ENCODE measurements at regions of chr7 and their contacts with region 1.

Region 1: DNA sequence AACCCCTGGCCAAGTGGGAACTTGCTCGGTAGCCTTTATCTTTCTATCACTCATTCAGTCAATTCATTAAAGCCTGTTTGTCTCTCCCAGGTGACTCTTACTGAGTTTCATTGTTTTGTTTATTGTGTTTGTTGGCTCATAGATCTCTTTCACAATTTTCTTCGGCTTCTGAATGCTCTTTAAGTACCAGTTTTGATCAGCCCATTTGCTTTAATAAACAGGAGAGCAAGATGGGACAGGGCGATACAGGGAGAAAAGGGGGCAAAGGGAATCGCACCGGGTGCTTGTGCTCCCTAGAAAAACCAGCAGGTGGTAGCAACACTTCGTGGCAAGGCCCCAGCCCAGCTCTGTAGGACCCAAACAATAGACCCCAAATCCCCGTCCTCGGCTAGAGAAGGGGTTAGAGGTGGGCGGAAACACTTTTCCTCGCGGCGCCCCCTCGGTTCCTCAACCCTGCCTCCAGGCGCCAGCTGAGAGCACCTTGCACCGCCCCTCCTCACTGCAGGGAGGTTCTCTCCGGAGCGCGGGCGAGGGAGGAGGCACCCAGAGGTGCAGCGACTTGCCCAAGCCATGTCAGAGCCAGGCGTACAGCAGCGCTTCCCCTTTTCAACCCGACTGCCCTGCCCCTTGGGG is 1.0 kb upstream of the EPHB6 start:
- DNase-seq: peak; percentile 78
- ATAC-seq: peak; percentile 84
- H3K4me3 Mint-ChIP-seq: peak overlapping the region; percentile 88
- H3K27ac Mint-ChIP-seq: peak overlapping the region; percentile 77
- H3K4me1 Mint-ChIP-seq: peaks cover 4% of the 10 kb centered on the region
- H3K27me3 Mint-ChIP-seq: peaks cover 15% of the 10 kb centered on the region

Region 2: DNA sequence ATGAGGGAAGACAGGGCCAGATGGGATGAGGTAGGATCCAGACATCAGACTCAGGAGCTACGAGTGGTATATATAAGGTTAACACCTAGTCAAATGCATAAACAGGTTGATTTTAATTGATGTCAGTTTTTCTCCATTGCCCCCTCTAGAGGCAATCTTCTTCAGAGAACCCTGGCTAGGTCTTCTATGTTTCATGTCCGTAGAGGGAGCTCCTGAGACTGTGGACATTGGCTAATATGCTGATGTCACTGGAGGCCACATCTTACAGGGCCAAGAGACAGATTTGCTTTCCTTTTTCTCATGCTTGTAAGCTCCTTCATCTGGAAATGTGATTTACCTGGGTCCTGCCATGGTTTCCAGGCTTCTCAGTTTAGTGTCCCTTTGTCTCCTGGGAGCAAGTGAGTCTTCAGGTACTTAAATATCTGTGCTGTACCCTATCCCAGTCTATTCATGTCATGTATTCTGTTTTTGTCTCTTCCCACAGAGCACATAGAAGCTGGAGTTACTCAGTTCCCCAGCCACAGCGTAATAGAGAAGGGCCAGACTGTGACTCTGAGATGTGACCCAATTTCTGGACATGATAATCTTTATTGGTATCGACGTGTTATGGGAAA is 266.2 kb before region 1 on chr7:
- CTCF ChIA-PET with region 1: no interaction called
- DNase-seq: no peak
- ATAC-seq: peak; percentile 88
- H3K4me3 Mint-ChIP-seq: no peak overlapping the region
- H3K27ac Mint-ChIP-seq: no peak overlapping the region
- H3K4me1 Mint-ChIP-seq: peaks cover 4% of the 10 kb centered on the region
- H3K27me3 Mint-ChIP-seq: no peaks in the 10 kb centered on the region

Region 3: DNA sequence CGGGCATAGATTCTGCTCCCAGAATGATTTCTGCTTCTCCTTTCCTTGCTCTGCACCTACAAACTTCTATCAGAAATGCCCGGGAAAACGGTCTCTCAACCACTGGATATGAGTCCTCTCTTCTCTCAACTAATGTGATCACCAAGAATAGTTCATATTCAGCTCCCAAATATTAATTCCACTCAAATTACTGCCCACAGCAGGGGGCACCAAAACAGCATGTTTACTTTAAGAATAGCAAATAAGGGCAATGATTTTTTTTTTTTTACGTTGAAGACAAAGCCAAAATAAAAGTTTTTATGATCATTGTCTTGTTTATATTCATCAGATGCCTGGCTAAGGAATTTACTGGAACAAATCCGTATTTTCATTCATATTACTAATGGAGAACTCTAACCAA is 199.5 kb before region 1 on chr7:
- CTCF ChIA-PET with region 1: no interaction called
- DNase-seq: no peak
- ATAC-seq: no peak
- H3K4me3 Mint-ChIP-seq: no peak overlapping the region
- H3K27ac Mint-ChIP-seq: no peak overlapping the region
- H3K4me1 Mint-ChIP-seq: peaks cover 5% of the 10 kb centered on the region
- H3K27me3 Mint-ChIP-seq: peaks cover 7% of the 10 kb centered on the region

Region 4: DNA sequence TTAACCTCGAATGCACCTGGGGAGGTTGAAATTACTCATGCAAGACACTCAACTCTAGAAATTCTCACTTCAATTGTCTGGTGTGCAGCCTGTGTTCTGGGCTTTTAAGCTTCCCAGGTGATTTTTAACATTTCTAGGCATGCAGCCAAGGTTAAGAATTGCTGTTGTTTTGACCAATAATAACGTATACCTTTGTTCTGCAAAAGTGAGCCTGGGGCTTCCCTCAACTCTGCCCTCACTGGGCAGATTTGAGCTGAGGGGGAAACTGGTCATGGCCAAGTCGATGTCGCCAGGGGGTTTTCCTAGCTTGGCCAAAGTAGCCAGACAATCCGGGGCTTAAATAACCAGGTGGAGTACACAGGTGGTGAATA is 82.5 kb before region 1 on chr7:
- CTCF ChIA-PET with region 1: no interaction called
- DNase-seq: no peak
- ATAC-seq: no peak
- H3K4me3 Mint-ChIP-seq: no peak overlapping the region
- H3K27ac Mint-ChIP-seq: no peak overlapping the region
- H3K4me1 Mint-ChIP-seq: peaks cover 12% of the 10 kb centered on the region
- H3K27me3 Mint-ChIP-seq: no peaks in the 10 kb centered on the region

Region 5: GRCh38 chr7:142866361-142867058 is 12.7 kb after region 1 on chr7:
- CTCF ChIA-PET with region 1: interaction called, 21 read pairs
- DNase-seq: peak; percentile 35
- ATAC-seq: peak; percentile 27
- H3K4me3 Mint-ChIP-seq: no peak overlapping the region
- H3K27ac Mint-ChIP-seq: no peak overlapping the region
- H3K4me1 Mint-ChIP-seq: no peaks in the 10 kb centered on the region
- H3K27me3 Mint-ChIP-seq: no peaks in the 10 kb centered on the region

Region 6: DNA sequence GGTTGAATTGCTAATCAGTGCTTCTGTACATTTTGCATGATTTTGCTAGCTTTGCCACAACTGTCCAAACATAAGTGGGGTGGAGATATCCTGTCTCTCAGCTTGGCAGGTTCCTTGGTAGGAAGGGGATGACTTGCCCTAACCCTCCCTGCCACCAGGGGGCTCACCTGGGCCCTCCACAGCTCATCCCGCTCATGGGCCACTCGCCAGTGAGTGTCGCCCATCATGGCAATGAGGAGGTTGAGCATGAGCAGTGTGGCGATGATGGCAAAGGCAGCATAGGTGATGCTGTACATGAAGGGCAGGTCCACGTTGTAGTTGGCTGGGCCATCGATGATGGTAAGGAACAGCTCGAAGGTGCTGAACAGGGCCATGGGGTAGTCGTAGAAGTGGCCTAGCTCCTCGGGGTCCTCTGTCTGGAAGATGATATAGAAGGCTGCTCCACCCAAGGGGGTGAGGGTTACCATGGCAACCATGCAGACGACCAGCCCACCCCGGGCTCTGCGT is 19.5 kb after region 1 on chr7:
- CTCF ChIA-PET with region 1: interaction called, 21 read pairs
- DNase-seq: peak; percentile 50
- ATAC-seq: peak; percentile 54
- H3K4me3 Mint-ChIP-seq: no peak overlapping the region
- H3K27ac Mint-ChIP-seq: no peak overlapping the region
- H3K4me1 Mint-ChIP-seq: no peaks in the 10 kb centered on the region
- H3K27me3 Mint-ChIP-seq: no peaks in the 10 kb centered on the region

Region 7: DNA sequence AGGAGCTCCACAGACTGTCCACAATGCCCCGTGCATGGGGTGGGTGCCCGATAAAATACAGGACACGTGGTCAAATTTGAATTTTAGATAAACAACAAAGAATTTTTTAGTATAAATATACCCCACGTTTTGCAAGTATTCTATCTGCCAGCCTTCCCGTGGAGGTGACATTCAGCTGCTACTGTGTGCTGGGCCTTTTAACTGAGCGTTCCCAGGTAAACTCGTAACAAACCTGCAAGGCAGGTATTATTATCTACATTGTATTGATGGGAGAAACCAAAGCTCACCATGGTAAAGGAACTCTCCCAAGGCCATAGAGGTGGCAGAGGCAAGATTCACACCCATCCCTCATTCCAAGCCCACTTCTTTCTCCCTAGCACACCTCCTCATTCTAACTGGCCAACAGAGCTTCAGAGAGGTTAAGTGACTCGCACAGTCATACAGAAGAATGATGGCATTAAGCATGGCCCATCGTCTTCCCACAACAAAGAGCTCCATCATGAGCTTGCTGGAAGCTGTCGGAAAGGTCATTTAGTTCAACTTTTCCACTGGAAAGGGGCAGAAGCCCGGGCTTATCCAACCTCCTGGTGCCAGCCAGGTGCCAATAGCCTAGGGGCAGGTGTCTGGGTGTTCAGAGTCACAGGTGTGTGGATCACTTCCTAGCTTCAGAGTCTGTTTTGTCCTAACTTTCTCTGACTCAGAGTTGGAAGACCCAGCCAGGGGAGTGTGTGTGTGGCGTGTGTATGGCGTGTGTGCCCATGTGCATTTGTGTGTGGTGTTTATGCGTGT is 32.8 kb after region 1 on chr7:
- CTCF ChIA-PET with region 1: no interaction called
- DNase-seq: no peak
- ATAC-seq: no peak
- H3K4me3 Mint-ChIP-seq: no peak overlapping the region
- H3K27ac Mint-ChIP-seq: no peak overlapping the region
- H3K4me1 Mint-ChIP-seq: no peaks in the 10 kb centered on the region
- H3K27me3 Mint-ChIP-seq: peaks cover 3% of the 10 kb centered on the region

Measured in activated CD8-positive, alpha-beta memory T cell treated with anti-CD3 and anti-CD28 coated beads, Interleukin-2, amount 10 ng/mL, durations not matched to agents 7 days and 5 days (primary cell).